Activated B cell treated with CpG ODN at 0.5 μM for 24 hours (primary cell): ENCODE measurements at regions of chr5 and their contacts with region 1.

Region 1: GRCh38 chr5:144191998-144192397 is 21.3 kb downstream of the KCTD16 start:
- DNase-seq: no peak
- ATAC-seq: peak; percentile 75
- H3K4me3 Mint-ChIP-seq: no peak overlapping the region
- H3K27ac Mint-ChIP-seq: no peak overlapping the region
- H3K4me1 Mint-ChIP-seq: peaks cover 36% of the 10 kb centered on the region
- H3K27me3 Mint-ChIP-seq: no peaks in the 10 kb centered on the region
- CTCF ChIP-seq: no peak

Region 2: DNA sequence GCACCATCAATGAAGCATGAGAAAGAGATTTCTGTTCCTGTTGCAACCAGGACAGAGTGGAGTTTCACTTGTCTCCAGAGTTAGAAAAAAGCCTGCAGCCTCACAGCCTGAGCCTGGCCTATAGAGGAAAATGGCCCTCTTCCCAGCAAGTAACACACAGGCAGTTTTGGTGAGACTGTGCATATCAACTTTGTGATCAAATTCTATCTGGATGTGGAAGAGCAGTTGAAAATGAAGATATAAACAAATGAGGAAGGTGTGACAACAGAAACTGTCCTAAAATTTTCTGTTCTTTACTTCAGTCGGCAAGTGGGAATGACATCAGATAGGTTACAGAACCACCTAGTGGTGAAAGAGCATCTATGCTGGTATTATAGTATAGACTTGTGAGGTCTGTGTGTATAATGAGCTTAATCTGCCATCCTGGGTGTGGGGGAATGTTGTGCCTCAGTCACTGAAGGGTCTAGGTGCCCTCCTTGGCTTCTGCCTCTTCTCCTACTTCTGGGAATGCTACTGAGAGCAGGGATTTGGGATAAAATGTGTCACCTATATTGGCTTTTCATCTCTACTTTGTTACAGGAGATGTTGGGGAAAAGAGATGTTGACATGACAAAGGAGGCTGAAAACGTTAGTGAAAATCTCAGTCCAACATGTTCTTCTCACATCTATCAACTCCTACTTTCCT is 49.7 kb before region 1 on chr5:
- CTCF ChIA-PET with region 1: interaction called, 5 read pairs
- POLR2A ChIA-PET with region 1: no interaction called
- intact Hi-C with region 1: loop called (anchors 1 kb)
- DNase-seq: no peak
- ATAC-seq: peak; percentile 90
- H3K4me3 Mint-ChIP-seq: no peak overlapping the region
- H3K27ac Mint-ChIP-seq: peak overlapping the region; percentile 74
- H3K4me1 Mint-ChIP-seq: peaks cover 17% of the 10 kb centered on the region
- H3K27me3 Mint-ChIP-seq: no peaks in the 10 kb centered on the region
- CTCF ChIP-seq: no peak

Region 3: DNA sequence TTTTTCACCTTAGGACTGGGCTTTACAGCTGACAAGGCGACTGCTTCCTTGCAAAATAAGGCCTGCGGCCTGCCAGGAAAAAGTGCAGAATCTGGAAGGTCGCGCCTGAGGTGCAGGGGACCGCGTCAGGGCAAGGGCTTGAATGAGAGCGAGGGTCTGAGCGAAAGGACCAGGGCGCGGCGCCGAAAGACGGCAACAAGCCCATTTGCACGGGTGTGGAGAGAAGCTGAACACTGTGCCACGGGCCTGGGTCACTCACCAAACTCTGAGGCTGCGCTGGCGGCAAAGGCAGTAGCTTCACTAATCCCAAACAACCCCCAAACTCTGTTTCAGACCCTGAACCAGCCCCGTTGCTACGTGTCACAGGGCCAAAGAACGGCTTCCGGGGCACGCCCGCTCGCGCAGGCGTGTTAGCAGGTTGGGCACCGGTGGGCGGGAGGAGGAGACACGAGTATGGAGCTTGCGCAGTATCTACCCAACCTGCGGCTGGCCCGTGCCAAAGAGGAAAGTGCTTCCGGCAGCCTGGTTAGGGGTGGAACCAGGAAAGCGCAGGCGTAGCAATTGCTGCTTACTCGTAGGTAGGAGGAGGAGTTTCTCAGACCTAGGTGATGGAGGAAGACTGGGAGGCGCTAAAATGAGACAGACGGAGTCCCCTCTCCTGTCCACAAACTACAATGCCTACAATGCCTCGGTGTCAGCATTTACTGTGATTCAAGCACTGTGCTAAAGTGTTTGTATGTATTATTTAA is 21.5 kb before region 1 on chr5 and contains the starts of genes KCTD16 and YIPF5:
- CTCF ChIA-PET with region 1: interaction called, 32 read pairs
- POLR2A ChIA-PET with region 1: interaction called, 38 read pairs
- intact Hi-C with region 1: loop called (anchors 1 kb)
- DNase-seq: peak; percentile 91
- ATAC-seq: peak; percentile 98
- H3K4me3 Mint-ChIP-seq: peak within 1 kb of the TSS; percentile 90
- H3K27ac Mint-ChIP-seq: peak within 1 kb of the TSS; percentile 90
- H3K4me1 Mint-ChIP-seq: peaks cover 29% of the 10 kb centered on the region
- H3K27me3 Mint-ChIP-seq: peaks cover 3% of the 10 kb centered on the region
- CTCF ChIP-seq: no peak
- total RNA-seq, gene KCTD16: not detected in 2 replicates
- total RNA-seq, gene YIPF5: 28.0 and 29.4 TPM in 2 replicates

Region 4: DNA sequence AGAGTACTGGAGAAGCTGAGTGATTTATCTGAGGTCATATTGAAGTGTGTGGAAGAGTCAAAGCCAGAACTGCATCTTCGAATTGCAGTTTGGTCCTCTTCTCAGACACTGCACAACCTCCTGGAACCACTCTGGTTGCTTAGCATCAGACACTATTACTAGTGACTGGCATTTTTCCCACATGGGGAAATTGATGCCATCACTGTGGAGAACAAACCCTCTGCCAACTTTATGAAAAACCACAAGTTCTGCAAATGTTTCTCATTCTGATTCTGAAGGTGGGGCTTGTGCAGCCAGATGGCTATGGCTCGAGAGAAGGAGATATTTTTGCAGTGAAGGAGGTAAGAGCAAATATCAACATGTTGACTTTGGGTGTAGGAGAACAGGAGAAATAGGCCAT is 45.9 kb after region 1 on chr5:
- CTCF ChIA-PET with region 1: no interaction called
- POLR2A ChIA-PET with region 1: no interaction called
- intact Hi-C with region 1: no loop called
- DNase-seq: no peak
- ATAC-seq: no peak
- H3K4me3 Mint-ChIP-seq: no peak overlapping the region
- H3K27ac Mint-ChIP-seq: no peak overlapping the region
- H3K4me1 Mint-ChIP-seq: no peaks in the 10 kb centered on the region
- H3K27me3 Mint-ChIP-seq: no peaks in the 10 kb centered on the region
- CTCF ChIP-seq: no peak

Region 5: GRCh38 chr5:144284931-144285502 is 93.0 kb after region 1 on chr5:
- CTCF ChIA-PET with region 1: no interaction called
- POLR2A ChIA-PET with region 1: no interaction called
- intact Hi-C with region 1: no loop called
- DNase-seq: no peak
- ATAC-seq: no peak
- H3K4me3 Mint-ChIP-seq: no peak overlapping the region
- H3K27ac Mint-ChIP-seq: no peak overlapping the region
- H3K4me1 Mint-ChIP-seq: no peaks in the 10 kb centered on the region
- H3K27me3 Mint-ChIP-seq: no peaks in the 10 kb centered on the region
- CTCF ChIP-seq: no peak

Region 6: DNA sequence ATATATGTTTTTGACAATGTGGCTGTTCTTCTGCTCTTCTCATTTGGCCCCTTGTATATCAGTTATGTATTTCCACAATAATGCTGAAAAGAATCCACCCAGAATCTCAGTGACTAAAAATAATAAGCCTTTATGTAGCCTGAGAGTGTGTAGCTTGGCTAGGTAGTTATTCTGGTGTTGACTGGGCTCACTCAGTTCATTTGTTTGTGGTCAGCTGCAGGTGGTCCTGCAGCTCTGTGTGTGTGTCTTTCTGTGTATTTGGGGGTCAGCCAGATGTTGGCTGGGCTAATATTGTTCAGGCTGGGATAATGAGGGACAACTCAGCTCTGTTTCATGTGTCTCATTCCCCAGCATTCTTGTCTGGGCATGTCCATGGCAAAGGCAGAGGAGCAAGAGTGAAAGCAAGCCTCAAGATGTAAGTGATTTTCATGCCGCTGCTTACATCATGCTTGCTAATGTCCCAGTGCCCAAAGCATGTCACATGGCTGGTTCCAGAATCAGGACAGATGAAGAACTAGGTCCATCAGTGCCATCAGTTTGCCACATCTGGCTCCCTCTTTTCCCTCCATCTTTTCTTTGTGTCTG is 141.4 kb after region 1 on chr5:
- CTCF ChIA-PET with region 1: no interaction called
- POLR2A ChIA-PET with region 1: no interaction called
- intact Hi-C with region 1: no loop called
- DNase-seq: no peak
- ATAC-seq: no peak
- H3K4me3 Mint-ChIP-seq: no peak overlapping the region
- H3K27ac Mint-ChIP-seq: no peak overlapping the region
- H3K4me1 Mint-ChIP-seq: no peaks in the 10 kb centered on the region
- H3K27me3 Mint-ChIP-seq: no peaks in the 10 kb centered on the region
- CTCF ChIP-seq: no peak

Region 7: GRCh38 chr5:146179696-146180095 is 1987.7 kb after region 1 on chr5:
- CTCF ChIA-PET with region 1: no interaction called
- POLR2A ChIA-PET with region 1: no interaction called
- intact Hi-C with region 1: loop called (anchors 5 kb)
- DNase-seq: no peak
- ATAC-seq: no peak
- H3K4me3 Mint-ChIP-seq: no peak overlapping the region
- H3K27ac Mint-ChIP-seq: no peak overlapping the region
- H3K4me1 Mint-ChIP-seq: peaks cover 25% of the 10 kb centered on the region
- H3K27me3 Mint-ChIP-seq: no peaks in the 10 kb centered on the region
- CTCF ChIP-seq: no peak